Pancreas (tissue), 10 donors: ENCODE measurements at regions of chr12 and their contacts with region 1.

Region 1: GRCh38 chr12:47837190-47838171 is 17.8 kb upstream of the HDAC7 start:
- DNase-seq: peak; percentile 47 to 83 (median 70)
- ATAC-seq: peak; percentile 84 to 94 (median 89)
- H3K4me3 ChIP-seq: no peak overlapping the region
- H3K27ac ChIP-seq: no peak overlapping the region
- H3K4me1 ChIP-seq: no peaks in the 10 kb centered on the region
- H3K27me3 ChIP-seq: no peaks in the 10 kb centered on the region
- CTCF ChIP-seq: peak; percentile 86 to 97 (median 92)

Region 2: DNA sequence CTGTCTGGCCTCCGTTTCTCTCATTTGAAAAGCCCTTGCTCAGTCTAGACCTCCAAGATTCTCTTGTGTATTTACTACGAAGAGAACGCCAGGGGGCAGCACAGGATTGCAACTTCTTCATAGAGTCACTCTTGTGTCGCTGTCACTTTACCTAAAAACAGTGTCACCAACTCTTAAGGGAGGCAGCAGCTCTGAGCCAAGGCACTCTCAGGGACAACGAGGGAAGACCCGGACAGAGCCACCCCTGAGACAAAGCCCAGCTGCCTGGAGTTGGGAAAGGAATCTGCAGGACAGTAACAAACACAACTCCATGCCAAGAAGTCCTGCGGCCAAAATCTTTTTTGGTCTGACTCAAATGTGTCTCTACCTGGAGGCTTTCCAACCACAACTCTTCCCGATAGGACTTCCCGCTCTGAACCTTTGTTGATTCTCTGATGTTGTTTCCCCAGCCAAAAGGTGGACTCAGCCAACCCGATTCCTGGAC is 122.0 kb before region 1 on chr12:
- intact Hi-C with region 1: loop called in 2 of 3 experiments (anchors 5 to 10 kb)
- DNase-seq: peak in 4 of 6 donors; percentile 64 to 75 (median 70)
- ATAC-seq: peak; percentile 69 to 86 (median 84)
- H3K4me3 ChIP-seq: no peak overlapping the region
- H3K27ac ChIP-seq: peak overlapping the region in 2 of 4 donors; percentile 2 to 46
- H3K4me1 ChIP-seq: peaks cover 0 to 20% (median 0%) of the 10 kb centered on the region in 3 donors
- H3K27me3 ChIP-seq: no peaks in the 10 kb centered on the region
- CTCF ChIP-seq: peak; percentile 49 to 74 (median 62)